HEK293 (cell line): ENCODE measurements at regions of chr5 and their contacts with region 1.

Region 1: GRCh38 chr5:96595300-96596090 is 66.7 kb upstream of the CAST start:
- H3K4me3 ChIP-seq: no peak overlapping the region
- H3K27ac ChIP-seq: no peak overlapping the region
- H3K4me1 ChIP-seq: no peaks in the 10 kb centered on the region
- CTCF ChIP-seq: no peak

Region 2: DNA sequence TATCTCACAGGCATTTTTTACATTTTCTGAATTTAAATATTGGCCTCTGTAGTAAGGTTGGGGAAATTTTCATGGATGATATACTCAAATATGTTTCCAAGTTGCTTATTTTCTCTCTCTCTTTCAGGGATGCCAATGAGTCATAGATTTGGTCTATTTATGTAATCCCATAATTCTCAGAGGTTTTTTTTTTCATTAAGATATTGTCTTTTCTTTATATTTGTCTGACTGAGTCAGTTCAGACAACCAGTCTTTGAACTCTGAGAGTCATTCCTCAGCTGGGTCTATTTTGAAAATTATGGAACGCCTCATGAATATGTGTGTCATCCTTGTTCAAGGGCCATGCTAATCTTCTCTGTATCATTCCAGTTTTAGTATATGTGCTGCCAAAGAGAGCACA is 385.7 kb before region 1 on chr5:
- CTCF ChIA-PET with region 1: no interaction called
- POLR2A ChIA-PET with region 1: no interaction called
- H3K4me3 ChIP-seq: no peak overlapping the region
- H3K27ac ChIP-seq: no peak overlapping the region
- H3K4me1 ChIP-seq: no peaks in the 10 kb centered on the region
- CTCF ChIP-seq: no peak

Region 3: DNA sequence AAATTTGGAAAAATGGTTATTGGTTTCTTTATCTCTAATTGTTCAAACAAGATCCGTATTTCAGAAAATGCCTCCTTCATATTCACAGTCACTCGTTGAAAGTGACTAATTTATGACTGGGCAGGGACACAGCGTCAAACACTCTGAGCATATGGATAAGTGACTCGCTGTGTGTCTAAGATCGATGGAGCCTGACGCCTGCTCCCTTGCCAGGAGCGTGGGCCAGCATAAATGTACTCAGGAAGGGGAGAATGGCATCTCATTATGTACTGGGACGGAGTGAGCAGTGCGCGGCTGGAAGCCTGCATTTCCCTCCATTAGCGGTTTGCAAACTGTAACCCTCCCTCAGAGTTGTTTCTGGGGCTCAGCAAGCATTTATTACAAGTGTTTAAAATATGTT is 13.2 kb before region 1 on chr5:
- CTCF ChIA-PET with region 1: interaction called, 16 read pairs
- POLR2A ChIA-PET with region 1: no interaction called
- H3K4me3 ChIP-seq: no peak overlapping the region
- H3K27ac ChIP-seq: no peak overlapping the region
- H3K4me1 ChIP-seq: peaks cover 3% of the 10 kb centered on the region; the same call in 1 of the 2 replicates
- CTCF ChIP-seq: no peak

Region 4: GRCh38 chr5:96823900-96824351 is 228.4 kb after region 1 on chr5:
- CTCF ChIA-PET with region 1: no interaction called
- POLR2A ChIA-PET with region 1: no interaction called
- H3K4me3 ChIP-seq: no peak overlapping the region
- H3K27ac ChIP-seq: no peak overlapping the region
- H3K4me1 ChIP-seq: no peaks in the 10 kb centered on the region; the same call in 1 of the 2 replicates
- CTCF ChIP-seq: no peak